ENCODE measurements at regions of chr11 and their contacts with region 1.

Region 1: GRCh38 chr11:128422576-128423370 is 164.6 kb downstream of the ETS1 start:
- DNase-seq: peak; percentile 66 to 80
- ATAC-seq: peak in 6 of 8 donors; percentile 44 to 95 (median 66)
- H3K4me3 ChIP-seq: peak overlapping the region in 1 of 10 donors; percentile 6
- H3K27ac ChIP-seq: peak overlapping the region in 8 of 10 donors; percentile 22 to 88 (median 76)
- H3K4me1 ChIP-seq: peaks cover 16 to 48% (median 37%) of the 10 kb centered on the region in 9 donors
- H3K27me3 ChIP-seq: no peaks in the 10 kb centered on the region
- CTCF ChIP-seq: no peak

Region 2: DNA sequence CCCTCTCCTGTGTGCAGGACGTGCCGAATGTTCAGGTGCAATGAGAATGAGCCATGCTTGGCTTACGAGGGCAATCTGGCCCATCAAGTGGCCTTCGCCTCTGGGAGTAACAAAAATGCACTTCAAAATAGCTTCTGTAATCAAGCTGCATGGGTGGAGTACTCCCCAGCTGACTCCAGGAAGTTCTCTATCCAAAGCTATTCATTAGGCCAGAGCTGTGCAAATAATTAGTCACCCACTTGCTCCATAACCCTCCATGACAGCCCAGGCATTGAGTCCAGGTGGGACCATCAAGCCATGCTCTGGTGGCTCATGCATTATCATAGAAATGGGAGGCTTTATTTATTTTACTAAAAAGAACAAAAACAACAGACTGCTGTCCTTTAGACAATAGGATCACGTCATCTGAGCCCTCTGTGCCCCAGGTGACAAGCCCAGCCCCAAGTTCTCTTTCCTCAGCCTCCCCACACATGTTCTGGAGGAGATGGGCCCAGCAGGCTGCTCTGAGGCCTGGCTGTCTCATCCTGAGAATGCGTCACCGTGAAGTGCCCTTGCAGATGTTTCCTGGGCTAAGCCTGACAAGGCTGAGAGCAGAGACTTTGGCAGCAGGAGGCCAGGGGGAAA is 80.2 kb before region 1 on chr11:
- intact Hi-C with region 1: loop called in 2 of 10 experiments (anchors 5 kb)
- DNase-seq: peak; percentile 30 to 75
- ATAC-seq: peak; percentile 86 to 96 (median 92)
- H3K4me3 ChIP-seq: no peak overlapping the region
- H3K27ac ChIP-seq: peak overlapping the region in 9 of 10 donors; percentile 61 to 83 (median 76)
- H3K4me1 ChIP-seq: peaks cover 0 to 43% (median 34%) of the 10 kb centered on the region in 9 donors
- H3K27me3 ChIP-seq: no peaks in the 10 kb centered on the region
- CTCF ChIP-seq: no peak

Region 3: GRCh38 chr11:128379587-128380580 is 42.9 kb before region 1 on chr11:
- intact Hi-C with region 1: loop called in 1 of 10 experiments (anchors 1 kb)
- DNase-seq: no peak
- ATAC-seq: no peak
- H3K4me3 ChIP-seq: no peak overlapping the region
- H3K27ac ChIP-seq: no peak overlapping the region
- H3K4me1 ChIP-seq: peaks cover 0 to 9% (median 0%) of the 10 kb centered on the region in 9 donors
- H3K27me3 ChIP-seq: no peaks in the 10 kb centered on the region
- CTCF ChIP-seq: no peak

Region 4: DNA sequence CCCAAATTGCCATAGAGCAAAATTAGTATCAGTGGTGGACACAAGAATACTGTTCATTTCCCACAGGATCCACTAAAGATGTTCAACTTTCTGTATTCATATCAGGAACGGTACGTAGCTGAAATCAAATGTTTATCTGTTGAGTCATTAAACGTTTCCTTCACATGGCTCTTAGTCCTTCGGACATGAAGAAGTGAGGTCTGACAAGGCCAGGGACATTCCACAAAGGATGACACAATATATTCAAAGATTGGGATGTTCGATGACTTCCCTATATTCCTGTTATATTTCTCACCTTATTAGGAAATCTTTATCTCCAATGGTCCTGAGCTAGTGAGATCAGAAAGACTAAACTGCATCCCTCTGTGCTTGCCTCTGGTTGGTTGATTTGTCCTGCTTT is 35.5 kb after region 1 on chr11:
- intact Hi-C with region 1: loop called in 1 of 10 experiments (anchors 5 kb)
- DNase-seq: no peak
- ATAC-seq: peak in 1 of 8 donors; percentile 23
- H3K4me3 ChIP-seq: no peak overlapping the region
- H3K27ac ChIP-seq: peak overlapping the region in 8 of 10 donors; percentile 11 to 66 (median 32)
- H3K4me1 ChIP-seq: peaks cover 4 to 66% (median 32%) of the 10 kb centered on the region in 9 donors
- H3K27me3 ChIP-seq: no peaks in the 10 kb centered on the region
- CTCF ChIP-seq: no peak

Region 5: GRCh38 chr11:128481135-128481534 is 58.4 kb after region 1 on chr11:
- intact Hi-C with region 1: no loop called
- DNase-seq: no peak
- ATAC-seq: peak in 6 of 8 donors; percentile 31 to 66 (median 55)
- H3K4me3 ChIP-seq: no peak overlapping the region
- H3K27ac ChIP-seq: peak overlapping the region in 9 of 10 donors; percentile 54 to 79 (median 69)
- H3K4me1 ChIP-seq: peaks cover 10 to 98% (median 85%) of the 10 kb centered on the region in 9 donors
- H3K27me3 ChIP-seq: no peaks in the 10 kb centered on the region
- CTCF ChIP-seq: no peak